GM12878 (cell line): ENCODE measurements at regions of chr1 and their contacts with region 1.

Region 1: GRCh38 chr1:170537798-170538503 is 6.0 kb downstream of the GORAB start:
- DNase-seq: no peak
- ATAC-seq: no peak
- H3K4me3 ChIP-seq: no peak overlapping the region
- H3K27ac ChIP-seq: no peak overlapping the region
- H3K4me1 ChIP-seq: no peaks in the 10 kb centered on the region
- H3K27me3 ChIP-seq: no peaks in the 10 kb centered on the region
- CTCF ChIP-seq: no peak
- EP300 ChIP-seq: no peak
- POLR2A ChIP-seq: no peak
- RAD21 ChIP-seq: no peak

Region 2: GRCh38 chr1:170562646-170563338 is 24.8 kb after region 1 on chr1:
- CTCF ChIA-PET with region 1: no interaction called
- POLR2A ChIA-PET with region 1: interaction called, 5 read pairs
- RAD21 ChIA-PET with region 1: interaction called, 4 read pairs
- SMC1A ChIA-PET with region 1: interaction called, 27 read pairs
- in situ Hi-C with region 1: no loop called
- intact Hi-C with region 1: no loop called
- DNase-seq: peak; percentile 21
- ATAC-seq: peak; percentile 83
- H3K4me3 ChIP-seq: no peak overlapping the region
- H3K27ac ChIP-seq: peak overlapping the region; percentile 1; the same call in 1 of the 2 replicates
- H3K4me1 ChIP-seq: no peaks in the 10 kb centered on the region; the same call in 1 of the 2 replicates
- H3K27me3 ChIP-seq: no peaks in the 10 kb centered on the region
- CTCF ChIP-seq: no peak
- EP300 ChIP-seq: peak; percentile 45 to 46; a peak in 2 of 4 replicates
- POLR2A ChIP-seq: no peak
- RAD21 ChIP-seq: no peak

Region 3: GRCh38 chr1:170593173-170594011 is 55.4 kb after region 1 on chr1:
- CTCF ChIA-PET with region 1: no interaction called
- POLR2A ChIA-PET with region 1: interaction called, 5 read pairs
- RAD21 ChIA-PET with region 1: interaction called, 13 read pairs
- SMC1A ChIA-PET with region 1: interaction called, 13 read pairs
- in situ Hi-C with region 1: no loop called
- intact Hi-C with region 1: no loop called
- DNase-seq: no peak
- ATAC-seq: peak; percentile 55; the same call in 2 of the 3 replicates
- H3K4me3 ChIP-seq: no peak overlapping the region
- H3K27ac ChIP-seq: no peak overlapping the region
- H3K4me1 ChIP-seq: no peaks in the 10 kb centered on the region
- H3K27me3 ChIP-seq: no peaks in the 10 kb centered on the region
- CTCF ChIP-seq: 0 out of 6 replicates have a peak, but pooled peaks of 1 of the 3 experiments have one; percentile 1
- EP300 ChIP-seq: no peak
- POLR2A ChIP-seq: no peak
- RAD21 ChIP-seq: no peak

Region 4: GRCh38 chr1:170604065-170604464 is 66.1 kb after region 1 on chr1:
- CTCF ChIA-PET with region 1: no interaction called
- POLR2A ChIA-PET with region 1: no interaction called
- RAD21 ChIA-PET with region 1: no interaction called
- SMC1A ChIA-PET with region 1: no interaction called
- in situ Hi-C with region 1: no loop called
- intact Hi-C with region 1: no loop called
- DNase-seq: no peak
- ATAC-seq: no peak
- H3K4me3 ChIP-seq: no peak overlapping the region
- H3K27ac ChIP-seq: no peak overlapping the region
- H3K4me1 ChIP-seq: no peaks in the 10 kb centered on the region
- H3K27me3 ChIP-seq: no peaks in the 10 kb centered on the region
- CTCF ChIP-seq: no peak
- EP300 ChIP-seq: no peak
- POLR2A ChIP-seq: no peak
- RAD21 ChIP-seq: no peak

Region 5: GRCh38 chr1:170634293-170634692 is 96.3 kb after region 1 on chr1:
- CTCF ChIA-PET with region 1: no interaction called
- POLR2A ChIA-PET with region 1: no interaction called
- RAD21 ChIA-PET with region 1: interaction called, 5 read pairs
- SMC1A ChIA-PET with region 1: interaction called, 15 read pairs
- in situ Hi-C with region 1: no loop called
- intact Hi-C with region 1: no loop called
- DNase-seq: no peak
- ATAC-seq: peak; percentile 62
- H3K4me3 ChIP-seq: no peak overlapping the region
- H3K27ac ChIP-seq: no peak overlapping the region
- H3K4me1 ChIP-seq: no peaks in the 10 kb centered on the region
- H3K27me3 ChIP-seq: no peaks in the 10 kb centered on the region
- CTCF ChIP-seq: no peak
- EP300 ChIP-seq: no peak
- POLR2A ChIP-seq: no peak
- RAD21 ChIP-seq: no peak

Region 6: DNA sequence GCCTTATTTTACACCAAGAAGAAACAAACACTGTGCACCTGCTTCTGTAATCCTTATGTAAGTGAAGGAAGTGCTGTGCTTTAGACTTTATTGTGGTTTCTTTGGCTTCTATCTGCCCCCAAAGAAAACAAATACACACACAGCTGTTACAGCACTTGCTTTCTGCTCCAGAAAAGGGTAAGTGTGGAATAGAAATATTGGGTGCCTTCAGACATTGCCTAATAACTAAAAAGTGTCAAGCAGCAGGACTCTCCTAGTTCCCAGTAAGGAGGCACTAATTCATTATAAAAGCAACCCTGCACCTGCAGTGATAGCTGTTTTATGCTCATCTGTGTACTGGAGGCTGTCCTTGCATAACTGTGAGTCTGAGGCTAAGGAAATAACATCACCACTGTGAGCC is 102.6 kb after region 1 on chr1:
- CTCF ChIA-PET with region 1: interaction called, 6 read pairs
- POLR2A ChIA-PET with region 1: interaction called, 4 read pairs
- RAD21 ChIA-PET with region 1: no interaction called
- SMC1A ChIA-PET with region 1: interaction called, 11 read pairs
- in situ Hi-C with region 1: no loop called
- intact Hi-C with region 1: no loop called
- DNase-seq: no peak
- ATAC-seq: peak; percentile 49; the same call in 2 of the 3 replicates
- H3K4me3 ChIP-seq: no peak overlapping the region
- H3K27ac ChIP-seq: no peak overlapping the region
- H3K4me1 ChIP-seq: no peaks in the 10 kb centered on the region
- H3K27me3 ChIP-seq: no peaks in the 10 kb centered on the region
- CTCF ChIP-seq: no peak
- EP300 ChIP-seq: no peak
- POLR2A ChIP-seq: no peak
- RAD21 ChIP-seq: no peak

Region 7: GRCh38 chr1:170670802-170671628 is 133.1 kb after region 1 on chr1:
- CTCF ChIA-PET with region 1: interaction called, 4 read pairs
- POLR2A ChIA-PET with region 1: interaction called, 4 read pairs
- RAD21 ChIA-PET with region 1: interaction called, 10 read pairs
- SMC1A ChIA-PET with region 1: interaction called, 29 read pairs
- in situ Hi-C with region 1: no loop called
- intact Hi-C with region 1: no loop called
- DNase-seq: no peak
- ATAC-seq: peak; percentile 74
- H3K4me3 ChIP-seq: no peak overlapping the region
- H3K27ac ChIP-seq: no peak overlapping the region
- H3K4me1 ChIP-seq: no peaks in the 10 kb centered on the region
- H3K27me3 ChIP-seq: peaks cover 3 to 13% of the 10 kb centered on the region in 2 experiments; a peak in 3 of 4 replicates
- CTCF ChIP-seq: peak; percentile 54 to 65 (median 55)
- EP300 ChIP-seq: no peak
- POLR2A ChIP-seq: no peak
- RAD21 ChIP-seq: peak; percentile 51